Activated naive CD4-positive, alpha-beta T cell treated with anti-CD3 and anti-CD28 coated beads for 36 hours (primary cell): ENCODE measurements at regions of chr20 and their contacts with region 1.

Region 1: GRCh38 chr20:51541189-51542032 is 1.1 kb downstream of the NFATC2 start:
- DNase-seq: peak; percentile 91
- H3K4me3 Mint-ChIP-seq: peak overlapping the region; percentile 96
- H3K27ac Mint-ChIP-seq: peak overlapping the region; percentile 98
- H3K4me1 Mint-ChIP-seq: peaks cover 42% of the 10 kb centered on the region
- H3K27me3 Mint-ChIP-seq: no peaks in the 10 kb centered on the region

Region 2: GRCh38 chr20:51385646-51386530 is 155.5 kb before region 1 on chr20:
- CTCF ChIA-PET with region 1: interaction called, 11 read pairs
- intact Hi-C with region 1: loop called (anchors 1 kb)
- DNase-seq: peak; percentile 61
- H3K4me3 Mint-ChIP-seq: no peak overlapping the region
- H3K27ac Mint-ChIP-seq: no peak overlapping the region
- H3K4me1 Mint-ChIP-seq: peaks cover 48% of the 10 kb centered on the region
- H3K27me3 Mint-ChIP-seq: no peaks in the 10 kb centered on the region

Region 3: GRCh38 chr20:51423290-51423667 is 118.1 kb before region 1 on chr20:
- CTCF ChIA-PET with region 1: interaction called, 3 read pairs
- intact Hi-C with region 1: loop called (anchors 2 kb)
- DNase-seq: peak; percentile 44
- H3K4me3 Mint-ChIP-seq: no peak overlapping the region
- H3K27ac Mint-ChIP-seq: no peak overlapping the region
- H3K4me1 Mint-ChIP-seq: peaks cover 42% of the 10 kb centered on the region
- H3K27me3 Mint-ChIP-seq: no peaks in the 10 kb centered on the region

Region 4: DNA sequence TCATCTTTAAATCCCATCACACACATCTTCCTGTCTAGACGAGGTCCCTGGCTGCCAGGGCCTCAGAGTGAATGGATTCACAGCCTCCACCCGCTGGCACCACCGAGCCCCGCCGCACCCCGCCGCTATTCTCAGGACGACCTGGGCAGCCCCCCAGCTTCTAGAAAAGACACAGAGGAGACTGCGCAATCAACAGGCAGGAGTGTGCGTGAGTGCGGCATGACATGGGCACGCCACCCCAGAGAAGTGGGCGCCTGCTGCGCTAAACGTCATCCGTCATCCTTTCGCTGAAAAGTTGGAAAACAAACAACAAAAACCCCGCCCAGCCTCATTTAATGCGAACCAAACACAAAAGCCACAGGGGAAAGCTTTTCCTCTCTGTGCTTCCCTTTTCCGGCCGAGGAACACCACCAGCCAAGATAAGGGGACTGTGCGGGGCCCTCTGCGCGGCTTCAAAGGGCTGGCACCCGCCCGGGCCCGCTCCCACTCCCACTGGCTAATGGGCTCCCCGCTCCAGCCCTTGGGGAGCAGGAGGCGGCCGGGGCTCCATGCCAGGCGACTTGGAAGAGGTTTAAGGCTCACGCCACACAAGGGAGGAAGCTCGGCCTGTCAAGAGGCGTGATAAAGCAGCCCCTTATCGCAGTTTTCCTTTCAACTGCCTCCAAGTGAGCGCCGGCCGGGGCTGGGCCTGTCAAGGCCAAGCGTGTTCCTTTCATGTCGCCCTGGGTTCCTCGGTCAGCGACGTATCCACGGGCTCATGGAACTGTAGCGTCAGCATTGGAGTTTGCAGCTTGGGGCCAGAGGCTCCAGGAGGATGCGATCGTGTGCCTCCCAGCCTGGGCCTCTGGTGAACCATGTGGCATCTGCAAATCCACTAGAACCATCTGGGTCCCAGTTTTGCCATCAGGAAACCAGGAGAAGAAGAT is 49.0 kb before region 1 on chr20:
- CTCF ChIA-PET with region 1: interaction called, 3 read pairs
- intact Hi-C with region 1: loop called (anchors 1 kb)
- DNase-seq: no peak
- H3K4me3 Mint-ChIP-seq: no peak overlapping the region
- H3K27ac Mint-ChIP-seq: peak overlapping the region; percentile 93
- H3K4me1 Mint-ChIP-seq: peaks cover 97% of the 10 kb centered on the region
- H3K27me3 Mint-ChIP-seq: no peaks in the 10 kb centered on the region

Region 5: GRCh38 chr20:51500311-51500710 is 41.1 kb before region 1 on chr20:
- CTCF ChIA-PET with region 1: interaction called, 7 read pairs
- intact Hi-C with region 1: loop called (anchors 1 kb)
- DNase-seq: peak; percentile 70
- H3K4me3 Mint-ChIP-seq: no peak overlapping the region
- H3K27ac Mint-ChIP-seq: peak overlapping the region; percentile 87
- H3K4me1 Mint-ChIP-seq: peaks cover 68% of the 10 kb centered on the region
- H3K27me3 Mint-ChIP-seq: no peaks in the 10 kb centered on the region

Region 6: DNA sequence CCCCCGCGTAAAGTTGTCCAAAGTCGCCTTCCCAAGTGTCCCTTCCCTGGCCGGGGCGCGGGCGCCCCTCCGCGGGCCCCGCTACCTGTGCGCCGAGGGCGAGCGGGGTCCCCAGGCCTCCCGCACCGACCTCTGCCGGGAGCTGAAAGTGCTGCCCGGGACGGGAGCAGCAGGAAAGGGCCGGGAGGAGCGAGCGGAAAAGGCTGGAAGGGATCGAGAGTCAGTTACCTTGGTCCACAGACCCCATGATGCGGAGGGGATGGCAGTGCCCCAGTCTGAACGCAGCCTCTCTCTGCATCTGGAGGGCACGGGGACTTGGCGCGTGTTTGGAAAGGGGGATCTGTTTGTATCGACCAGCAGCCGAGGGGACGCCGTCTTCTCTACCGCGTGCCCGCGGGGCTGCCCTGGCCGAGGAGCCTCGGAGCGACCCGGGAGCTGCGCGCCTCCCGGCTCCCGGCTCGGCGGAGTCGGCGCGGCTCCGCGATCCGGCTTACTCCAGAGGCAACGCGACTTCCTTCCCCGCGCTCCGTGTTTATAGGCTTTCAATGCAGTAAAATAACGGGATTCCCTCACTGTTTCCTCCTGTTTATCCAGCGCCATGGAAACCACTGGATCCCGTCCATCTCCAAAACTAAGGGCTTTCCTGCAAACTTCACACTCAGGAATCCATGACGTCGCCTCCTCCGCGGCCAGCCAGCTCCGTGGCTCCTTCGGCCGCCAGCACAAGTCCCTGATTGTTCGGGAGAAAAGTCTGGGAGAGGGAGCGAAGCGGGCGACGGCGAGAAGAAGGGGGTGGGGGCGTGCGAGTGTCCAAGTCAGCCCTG is 21.1 kb after region 1 on chr20:
- CTCF ChIA-PET with region 1: interaction called, 3 read pairs
- intact Hi-C with region 1: loop called (anchors 2 kb)
- DNase-seq: no peak
- H3K4me3 Mint-ChIP-seq: peak overlapping the region; percentile 59
- H3K27ac Mint-ChIP-seq: no peak overlapping the region
- H3K4me1 Mint-ChIP-seq: peaks cover 23% of the 10 kb centered on the region
- H3K27me3 Mint-ChIP-seq: peaks cover 48% of the 10 kb centered on the region

Region 7: GRCh38 chr20:51750037-51750763 is 208.8 kb after region 1 on chr20:
- CTCF ChIA-PET with region 1: no interaction called
- intact Hi-C with region 1: no loop called
- DNase-seq: peak; percentile 17
- H3K4me3 Mint-ChIP-seq: no peak overlapping the region
- H3K27ac Mint-ChIP-seq: no peak overlapping the region
- H3K4me1 Mint-ChIP-seq: peaks cover 2% of the 10 kb centered on the region
- H3K27me3 Mint-ChIP-seq: peaks cover 3% of the 10 kb centered on the region